ENCODE measurements at regions of chr4 and their contacts with region 1.

Region 1: DNA sequence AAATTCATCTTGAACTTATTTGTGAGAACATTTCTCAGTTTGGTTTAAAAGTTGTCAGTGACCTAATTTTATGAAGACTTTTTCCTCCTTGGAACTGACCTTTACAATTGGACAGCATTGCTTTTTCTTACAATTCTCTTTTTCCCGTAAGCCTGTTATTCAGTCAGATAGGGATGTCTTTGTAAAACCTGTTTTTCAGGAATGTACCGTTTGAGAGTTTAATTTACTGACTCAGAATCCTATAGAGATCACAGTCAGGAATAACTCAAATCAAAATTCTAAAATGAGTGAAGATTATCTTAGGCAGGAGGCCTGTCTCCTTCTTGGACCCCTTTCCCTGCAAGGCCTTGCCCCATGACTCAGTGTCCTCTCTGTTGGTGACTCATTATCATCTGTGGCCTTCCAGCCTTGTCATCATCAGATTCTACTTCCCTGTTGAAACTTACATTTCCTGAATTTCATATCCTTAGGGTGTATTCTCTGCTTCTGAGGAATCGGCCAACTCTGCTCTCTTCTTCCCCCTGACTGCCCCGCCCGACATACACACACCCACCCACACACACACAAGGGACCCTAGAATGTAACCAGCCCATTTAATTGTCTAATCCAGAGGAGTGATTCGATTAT is 99.8 kb downstream of the ARHGAP10 start:
- DNase-seq: peak; percentile 89
- ATAC-seq: peak; percentile 84
- H3K4me3 ChIP-seq: peak overlapping the region; percentile 60
- H3K27ac ChIP-seq: peak overlapping the region; percentile 93
- H3K4me1 ChIP-seq: peaks cover 31% of the 10 kb centered on the region
- H3K27me3 ChIP-seq: no peaks in the 10 kb centered on the region
- CTCF ChIP-seq: no peak

Region 2: DNA sequence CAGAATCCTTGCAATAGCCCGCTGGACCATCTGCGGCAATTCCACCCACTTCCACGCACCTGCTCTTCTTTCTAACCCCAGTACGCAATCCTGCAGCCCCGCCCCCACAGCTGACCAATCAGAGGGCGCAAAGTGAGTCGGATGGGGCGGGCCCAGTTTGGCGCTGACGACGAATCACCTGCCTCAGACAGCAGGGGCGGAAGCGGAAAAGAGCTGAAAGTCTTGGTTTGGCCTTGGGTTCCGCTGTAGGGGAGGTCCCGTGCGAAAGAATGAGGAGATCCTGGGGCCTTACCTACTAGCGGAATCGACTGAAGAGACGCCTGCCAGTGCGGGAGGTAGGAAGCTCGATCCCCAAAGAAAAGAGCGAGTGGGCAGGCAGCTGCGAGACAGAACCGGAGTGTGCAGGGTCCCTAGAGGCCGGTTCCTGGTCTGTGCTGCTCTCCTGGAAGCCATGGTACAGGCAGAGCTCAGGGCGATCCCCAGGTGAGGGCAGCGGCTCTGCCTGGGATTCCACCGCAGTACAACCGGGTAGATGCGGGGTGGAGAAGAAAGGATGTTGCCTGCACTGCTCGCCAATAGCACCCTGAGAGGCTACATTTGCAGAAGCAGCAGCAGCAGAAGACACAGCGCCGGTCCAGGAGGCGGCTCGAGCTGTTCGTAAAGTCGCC is 214.4 kb before region 1 on chr4 and contains the start of gene TMEM184C:
- CTCF ChIA-PET with region 1: no interaction called
- POLR2A ChIA-PET with region 1: no interaction called
- intact Hi-C with region 1: no loop called
- DNase-seq: peak; percentile 95
- ATAC-seq: peak; percentile 97
- H3K4me3 ChIP-seq: peak within 1 kb of the TSS; percentile 91
- H3K27ac ChIP-seq: peak within 1 kb of the TSS; percentile 65
- H3K4me1 ChIP-seq: peaks cover 17% of the 10 kb centered on the region
- H3K27me3 ChIP-seq: no peaks in the 10 kb centered on the region
- CTCF ChIP-seq: no peak
- total RNA-seq, gene TMEM184C: 17.5 and 19.8 TPM in 2 replicates

Region 3: DNA sequence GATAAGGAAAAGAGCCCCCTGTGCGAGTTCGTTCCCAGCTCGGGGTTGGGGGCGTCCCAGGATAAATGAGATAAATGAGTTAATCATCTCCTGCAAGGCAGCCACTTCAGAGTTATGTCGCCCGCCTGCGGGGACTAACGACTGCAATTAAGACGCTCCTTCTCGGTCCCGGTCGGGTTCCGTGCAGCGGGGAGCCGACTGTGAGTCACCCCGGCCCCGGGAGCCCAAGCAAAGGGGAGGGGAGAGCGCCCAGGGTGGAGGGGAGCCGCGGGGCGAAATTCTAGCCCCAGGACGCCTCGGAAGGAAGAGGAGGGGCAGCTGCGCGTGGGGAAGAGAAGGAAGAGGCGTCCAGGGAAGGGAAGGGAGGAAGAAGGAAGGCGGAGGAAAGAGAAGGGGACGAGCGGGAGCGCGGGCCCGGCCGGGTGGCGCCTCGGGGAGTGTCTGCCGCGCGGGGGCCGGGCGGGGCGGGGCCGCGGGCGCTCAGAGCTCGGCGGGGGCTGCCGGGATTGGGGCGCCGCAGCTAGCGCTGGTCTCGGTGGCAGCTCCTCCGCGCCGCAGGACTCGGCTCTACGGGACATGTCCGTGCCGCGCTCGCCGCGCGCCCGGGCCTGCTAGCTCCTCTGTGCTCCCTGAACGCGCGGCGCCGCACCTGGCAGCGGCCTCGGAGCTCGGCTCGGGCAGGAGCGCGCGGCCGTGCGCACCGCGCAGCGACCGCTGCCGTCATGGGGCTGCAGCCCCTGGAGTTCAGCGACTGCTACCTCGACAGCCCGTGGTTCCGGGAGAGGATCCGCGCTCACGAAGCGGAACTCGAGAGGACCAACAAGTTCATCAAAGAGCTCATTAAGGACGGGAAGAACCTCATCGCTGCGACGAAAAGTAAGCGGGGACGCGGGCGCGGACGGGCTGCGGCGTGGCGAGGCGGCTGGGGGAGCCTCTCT is 99.8 kb before region 1 on chr4 and contains the start of gene ARHGAP10:
- CTCF ChIA-PET with region 1: no interaction called
- POLR2A ChIA-PET with region 1: no interaction called
- intact Hi-C with region 1: loop called (anchors 5 kb)
- DNase-seq: peak; percentile 71
- ATAC-seq: peak; percentile 67
- H3K4me3 ChIP-seq: peak within 1 kb of the TSS; percentile 95
- H3K27ac ChIP-seq: peak within 1 kb of the TSS; percentile 59
- H3K4me1 ChIP-seq: peaks cover 56% of the 10 kb centered on the region
- H3K27me3 ChIP-seq: no peaks in the 10 kb centered on the region
- CTCF ChIP-seq: no peak
- total RNA-seq, gene ARHGAP10: 9.0 and 12.0 TPM in 2 replicates

Region 4: GRCh38 chr4:147780137-147780777 is 51.4 kb before region 1 on chr4:
- CTCF ChIA-PET with region 1: no interaction called
- POLR2A ChIA-PET with region 1: no interaction called
- intact Hi-C with region 1: loop called (anchors 10 kb)
- DNase-seq: no peak
- ATAC-seq: no peak
- H3K4me3 ChIP-seq: no peak overlapping the region
- H3K27ac ChIP-seq: no peak overlapping the region
- H3K4me1 ChIP-seq: peaks cover 19% of the 10 kb centered on the region
- H3K27me3 ChIP-seq: no peaks in the 10 kb centered on the region
- CTCF ChIP-seq: no peak